HEK293T (cell line): ENCODE measurements at regions of chr14 and their contacts with region 1.

Region 1: DNA sequence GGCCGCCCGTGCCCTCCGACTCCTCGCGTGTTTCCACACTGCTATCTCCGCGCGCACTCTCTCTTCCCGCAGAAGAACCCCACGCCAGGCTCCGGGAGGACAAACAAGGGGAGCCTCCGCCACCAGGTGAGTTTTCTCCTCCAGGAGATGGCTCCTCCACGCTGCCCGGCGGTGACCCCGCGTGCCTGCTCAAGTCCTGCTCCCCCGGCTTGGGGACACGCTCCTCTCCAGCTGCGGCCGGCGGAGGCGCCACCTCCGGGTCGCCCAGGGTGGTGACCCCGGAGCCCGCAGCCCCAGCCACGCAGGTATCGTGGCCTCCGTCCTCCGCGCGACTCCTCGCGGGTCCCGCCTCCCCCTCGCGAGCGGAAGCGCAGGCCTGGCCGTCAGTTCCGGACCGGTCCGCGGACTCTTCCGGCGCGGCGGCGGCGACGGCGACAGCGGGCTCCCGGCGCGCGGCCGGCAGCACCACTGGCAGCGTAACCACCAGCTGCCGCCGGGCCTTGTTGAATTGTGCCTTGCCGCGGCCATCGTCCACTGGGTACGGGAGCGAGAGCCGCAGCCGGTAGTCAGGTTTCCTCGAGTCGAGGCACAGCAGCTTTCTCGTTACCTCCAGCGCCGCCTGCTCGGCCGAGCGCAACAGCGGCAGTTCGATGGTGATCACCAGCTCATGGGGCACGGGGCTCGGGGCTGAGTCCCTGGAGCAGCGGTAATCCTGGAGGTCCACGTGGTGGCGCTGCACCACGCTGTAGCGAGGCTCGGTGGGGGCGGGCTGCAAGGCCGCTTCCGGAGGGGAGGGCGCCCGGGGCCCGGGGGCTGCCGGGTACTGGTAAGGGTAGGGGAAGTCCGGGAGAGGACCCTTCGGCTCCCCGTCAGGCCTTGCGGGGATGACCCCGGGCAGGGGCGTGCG is 1.2 kb downstream of the DNAAF2 start:
- DNase-seq: peak; percentile 83

Region 2: DNA sequence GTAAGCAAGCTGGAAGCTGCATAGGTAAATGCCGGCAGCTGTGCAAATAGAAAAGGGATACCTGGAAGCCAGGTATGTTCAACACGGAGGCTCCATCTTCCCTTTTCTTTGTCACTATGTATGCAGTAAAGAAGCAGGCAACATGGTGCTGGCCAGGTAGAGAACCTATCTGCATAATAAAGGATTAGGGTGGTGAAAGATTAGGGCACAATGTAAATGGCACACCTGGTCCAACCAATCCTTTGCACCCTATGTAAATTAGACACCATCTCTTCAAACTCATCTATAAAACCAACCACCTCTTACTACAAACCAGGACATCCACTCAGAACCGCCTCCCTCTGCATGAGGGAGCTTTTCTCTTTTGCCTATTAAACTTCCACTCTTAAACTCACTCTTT is 80.0 kb before region 1 on chr14:
- CTCF ChIA-PET with region 1: no interaction called
- POLR2A ChIA-PET with region 1: no interaction called
- DNase-seq: no peak

Region 3: GRCh38 chr14:49585803-49586672 is 47.9 kb before region 1 on chr14 and contains the start of gene RPS29:
- CTCF ChIA-PET with region 1: interaction called, 3 read pairs
- POLR2A ChIA-PET with region 1: interaction called, 16 read pairs
- DNase-seq: peak; percentile 94

Region 4: GRCh38 chr14:49598485-49599300 is 35.2 kb before region 1 on chr14 and contains the start of gene LRR1:
- CTCF ChIA-PET with region 1: interaction called, 5 read pairs
- POLR2A ChIA-PET with region 1: interaction called, 11 read pairs
- DNase-seq: peak; percentile 66

Region 5: GRCh38 chr14:49620182-49621113 is 13.4 kb before region 1 on chr14 and contains the starts of genes MGAT2 and RPL36AL:
- CTCF ChIA-PET with region 1: interaction called, 11 read pairs
- POLR2A ChIA-PET with region 1: interaction called, 63 read pairs
- DNase-seq: peak; percentile 93

Region 6: GRCh38 chr14:49767562-49768300 is 133.8 kb after region 1 on chr14 and contains the start of gene KLHDC2:
- CTCF ChIA-PET with region 1: interaction called, 7 read pairs
- POLR2A ChIA-PET with region 1: interaction called, 43 read pairs
- DNase-seq: peak; percentile 79

Region 7: GRCh38 chr14:49852301-49853157 is 218.6 kb after region 1 on chr14 and contains the start of gene NEMF:
- CTCF ChIA-PET with region 1: no interaction called
- POLR2A ChIA-PET with region 1: interaction called, 20 read pairs
- DNase-seq: peak; percentile 74